GM13976 (cell line): ENCODE measurements at regions of chr12 and their contacts with region 1.

Region 1: DNA sequence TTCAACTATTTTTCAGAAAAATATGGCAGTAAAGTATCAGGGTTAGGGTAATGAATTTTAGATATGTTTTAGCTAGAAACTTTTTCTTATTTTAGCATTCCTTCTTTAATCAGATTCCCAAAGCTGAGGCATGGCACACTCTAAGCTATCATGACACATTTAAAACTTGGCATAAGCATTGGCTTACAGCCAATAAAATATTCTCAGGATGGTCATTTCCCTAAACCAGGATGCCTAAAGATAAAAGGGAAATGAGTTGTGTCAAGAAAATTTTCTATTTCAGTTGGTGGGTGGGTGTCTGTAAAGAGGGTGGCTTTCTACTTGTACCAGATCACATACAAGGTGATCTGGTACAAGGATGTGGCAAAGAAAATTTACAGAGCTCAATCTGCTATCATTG is 47.8 kb downstream of the PEBP1 start:
- DNase-seq: no peak
- CTCF ChIP-seq: no peak

Region 2: GRCh38 chr12:117994551-117995438 is 188.9 kb before region 1 on chr12:
- in situ Hi-C with region 1: no loop called
- DNase-seq: no peak
- CTCF ChIP-seq: no peak

Region 3: DNA sequence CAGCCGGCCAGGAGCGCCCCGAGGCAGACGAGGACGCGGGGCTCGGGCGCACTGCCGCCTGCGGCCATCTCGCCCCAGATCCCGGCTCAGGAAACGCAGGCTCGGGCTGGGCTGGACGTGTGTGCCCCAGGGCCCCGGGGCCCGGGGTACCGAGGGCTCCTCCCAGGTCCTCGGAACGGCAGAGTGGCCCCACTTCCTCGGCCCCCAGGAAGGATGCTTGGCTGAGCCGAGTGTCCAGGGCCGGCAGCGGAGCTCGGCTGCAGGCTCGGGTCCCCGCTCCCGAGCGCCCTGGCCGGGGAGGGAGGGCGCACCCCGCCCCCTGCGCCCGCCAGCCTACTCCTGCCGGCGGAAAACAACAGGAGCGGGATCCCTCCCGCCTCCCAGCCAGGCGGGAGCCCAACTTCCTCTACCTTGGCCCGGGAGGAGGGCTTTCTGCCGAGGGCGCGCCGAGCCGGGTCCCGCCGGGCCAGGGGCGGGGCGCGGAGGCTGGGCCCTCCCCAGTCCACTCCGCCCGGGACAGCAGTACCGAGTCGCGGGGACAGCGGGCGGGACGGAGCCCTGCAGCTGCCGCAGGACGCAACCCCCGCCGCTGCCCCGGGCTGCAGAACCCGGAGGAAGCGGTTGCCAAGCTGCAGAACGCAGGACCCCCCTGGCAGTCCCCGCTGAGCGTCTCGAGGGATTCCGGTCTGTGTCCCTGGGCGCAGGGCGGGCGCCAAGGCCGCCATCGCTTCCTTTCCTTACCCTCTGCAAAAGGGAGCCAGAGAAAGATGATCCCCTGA is 79.9 kb before region 1 on chr12 and contains the start of gene VSIG10:
- in situ Hi-C with region 1: no loop called
- DNase-seq: peak; percentile 77
- CTCF ChIP-seq: no peak

Region 4: DNA sequence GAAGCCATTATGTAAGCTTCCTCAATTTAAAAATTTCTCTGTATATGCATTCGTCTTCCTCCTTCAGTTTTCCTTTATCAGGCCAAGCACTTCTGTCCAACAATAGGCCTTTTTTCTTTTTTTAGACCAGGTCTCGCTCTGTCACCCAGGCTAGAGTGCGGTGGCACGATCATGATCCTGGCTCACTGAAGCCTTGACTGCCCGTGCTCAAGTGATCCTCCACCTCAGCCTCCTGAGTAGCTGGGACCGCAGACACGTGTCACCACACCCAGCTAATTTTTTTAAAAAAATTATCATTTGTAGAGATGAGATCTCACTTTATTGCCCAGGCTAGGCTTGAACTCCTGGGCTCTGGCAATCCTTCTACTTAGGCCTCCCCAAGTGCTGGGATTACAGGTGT is 163.2 kb after region 1 on chr12:
- in situ Hi-C with region 1: no loop called
- DNase-seq: no peak
- CTCF ChIP-seq: no peak

Region 5: DNA sequence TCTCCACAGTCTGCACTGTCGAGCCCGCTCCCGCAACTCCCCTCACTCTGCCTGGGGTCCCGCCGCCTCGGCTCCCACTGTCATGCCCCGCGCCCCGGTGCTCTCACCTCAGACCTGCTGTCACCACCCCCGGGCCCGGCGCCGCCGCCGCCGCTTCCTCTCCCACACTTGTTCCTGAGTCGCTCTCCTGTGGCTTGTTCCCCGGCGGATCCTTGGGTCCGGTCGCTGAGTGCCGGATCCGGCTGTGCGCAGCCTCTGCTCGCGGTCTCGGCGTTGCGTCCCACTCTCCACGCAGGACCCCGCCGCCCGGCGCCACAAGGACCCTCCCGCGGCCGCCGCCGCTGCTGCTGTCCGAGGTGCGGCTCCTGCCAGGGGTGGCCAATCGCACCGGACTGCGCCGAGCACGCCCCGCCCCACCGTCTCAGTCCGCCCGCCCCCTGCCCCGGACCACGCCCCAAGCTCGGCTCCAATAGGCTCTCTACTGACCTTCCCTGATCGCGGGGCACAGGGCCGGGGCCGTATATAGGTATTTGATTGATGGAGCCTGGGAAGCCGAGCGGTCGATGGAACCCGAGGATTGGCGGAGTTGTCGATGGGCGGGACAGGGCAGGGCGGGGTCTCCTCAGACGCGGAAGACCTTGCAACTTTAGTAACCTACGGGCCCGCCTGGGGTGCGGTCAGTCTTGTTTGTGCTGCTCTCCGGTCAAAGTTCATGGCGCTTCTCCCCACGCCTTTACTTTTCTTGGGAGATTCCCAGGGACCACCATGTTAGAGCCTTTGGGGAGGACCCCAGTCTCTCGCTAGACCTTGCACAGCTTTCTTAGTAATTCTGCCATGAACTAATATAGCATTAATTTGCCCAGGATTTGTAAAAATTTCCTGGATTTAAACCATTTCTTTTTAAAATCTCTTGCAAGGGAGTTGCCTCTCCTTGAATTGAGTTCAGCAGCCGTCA is 189.1 kb after region 1 on chr12 and contains the start of gene TAOK3:
- in situ Hi-C with region 1: loop called (anchors 5 kb)
- DNase-seq: peak; percentile 97
- CTCF ChIP-seq: no peak